ENCODE measurements at regions of chr10 and their contacts with region 1.

Region 1: GRCh38 chr10:102009801-102010425 is 46.1 kb downstream of the ARMH3 start:
- DNase-seq: peak; percentile 72 to 75
- H3K4me3 ChIP-seq: no peak overlapping the region
- H3K4me3 Mint-ChIP-seq: no peak overlapping the region
- H3K27ac Mint-ChIP-seq: peak overlapping the region; percentile 21
- H3K4me1 ChIP-seq: peaks cover 8% of the 10 kb centered on the region
- H3K4me1 Mint-ChIP-seq: peaks cover 13% of the 10 kb centered on the region
- H3K27me3 ChIP-seq: no peaks in the 10 kb centered on the region
- H3K27me3 Mint-ChIP-seq: no peaks in the 10 kb centered on the region
- CTCF ChIP-seq: peak; percentile 76 to 95

Region 2: GRCh38 chr10:101602761-101603398 is 407.0 kb before region 1 on chr10:
- CTCF ChIA-PET with region 1: interaction called, 20 read pairs
- POLR2A ChIA-PET with region 1: no interaction called
- intact Hi-C with region 1: loop called (anchors 1 kb)
- DNase-seq: peak; percentile 82 to 90
- H3K4me3 ChIP-seq: no peak overlapping the region
- H3K4me3 Mint-ChIP-seq: no peak overlapping the region
- H3K27ac Mint-ChIP-seq: no peak overlapping the region
- H3K4me1 ChIP-seq: no peaks in the 10 kb centered on the region
- H3K4me1 Mint-ChIP-seq: peaks cover 8% of the 10 kb centered on the region
- H3K27me3 ChIP-seq: no peaks in the 10 kb centered on the region
- H3K27me3 Mint-ChIP-seq: no peaks in the 10 kb centered on the region
- CTCF ChIP-seq: peak; percentile 91 to 94

Region 3: GRCh38 chr10:101835064-101835761 is 174.7 kb before region 1 on chr10:
- CTCF ChIA-PET with region 1: interaction called, 41 read pairs
- POLR2A ChIA-PET with region 1: no interaction called
- intact Hi-C with region 1: loop called (anchors 1 kb)
- DNase-seq: no peak
- H3K4me3 ChIP-seq: no peak overlapping the region
- H3K4me3 Mint-ChIP-seq: no peak overlapping the region
- H3K27ac Mint-ChIP-seq: peak overlapping the region; percentile 3
- H3K4me1 ChIP-seq: peaks cover 28% of the 10 kb centered on the region
- H3K4me1 Mint-ChIP-seq: peaks cover 10% of the 10 kb centered on the region
- H3K27me3 ChIP-seq: no peaks in the 10 kb centered on the region
- H3K27me3 Mint-ChIP-seq: no peaks in the 10 kb centered on the region
- CTCF ChIP-seq: no peak

Region 4: GRCh38 chr10:101889256-101890210 is 120.4 kb before region 1 on chr10:
- CTCF ChIA-PET with region 1: interaction called, 73 read pairs
- POLR2A ChIA-PET with region 1: no interaction called
- intact Hi-C with region 1: loop called (anchors 1 kb)
- DNase-seq: peak; percentile 77 to 81
- H3K4me3 ChIP-seq: no peak overlapping the region
- H3K4me3 Mint-ChIP-seq: no peak overlapping the region
- H3K27ac Mint-ChIP-seq: no peak overlapping the region
- H3K4me1 ChIP-seq: no peaks in the 10 kb centered on the region
- H3K4me1 Mint-ChIP-seq: no peaks in the 10 kb centered on the region
- H3K27me3 ChIP-seq: no peaks in the 10 kb centered on the region
- H3K27me3 Mint-ChIP-seq: no peaks in the 10 kb centered on the region
- CTCF ChIP-seq: peak; percentile 84 to 93

Region 5: DNA sequence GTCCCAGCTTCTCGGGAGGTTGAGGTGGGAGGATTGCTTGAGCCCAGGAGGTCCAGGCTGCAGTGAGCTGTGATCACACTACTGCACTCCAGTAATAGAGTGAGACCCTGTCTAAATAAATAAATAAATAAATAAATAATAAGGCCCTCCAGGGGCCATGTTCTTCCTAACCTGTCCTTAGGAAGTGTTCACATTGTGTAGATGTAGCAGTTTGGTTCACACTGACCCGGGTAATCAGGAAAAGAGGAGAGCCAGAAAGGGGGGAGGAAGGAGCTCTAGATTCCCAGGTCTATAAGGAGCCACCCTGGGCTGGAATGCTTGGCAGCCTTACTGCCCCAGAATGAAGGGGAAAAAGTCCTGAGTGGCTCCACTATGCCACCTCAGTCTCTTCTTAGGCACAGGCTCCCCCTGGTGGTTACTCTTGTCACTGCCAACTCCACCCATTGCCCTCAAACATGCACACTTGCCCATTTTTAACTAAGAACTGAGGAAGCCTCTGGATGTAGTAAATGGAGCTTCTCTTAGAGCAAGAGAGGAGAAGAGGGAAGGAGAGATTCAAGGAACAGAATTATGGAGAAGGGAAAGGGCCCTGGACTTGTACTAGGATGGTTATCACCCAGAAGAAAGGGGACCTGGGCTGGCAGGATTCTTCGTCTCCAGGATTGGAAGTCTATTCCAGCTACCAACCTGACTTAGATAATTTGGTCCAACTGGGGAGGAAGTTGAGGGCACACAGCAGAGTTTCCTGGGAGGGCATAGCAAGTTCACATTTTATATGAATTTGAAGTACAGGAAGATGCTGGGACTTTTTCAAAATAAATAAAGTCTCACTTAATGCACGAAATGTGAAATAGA is 63.0 kb after region 1 on chr10:
- CTCF ChIA-PET with region 1: interaction called, 17 read pairs
- POLR2A ChIA-PET with region 1: no interaction called
- intact Hi-C with region 1: loop called (anchors 1 kb)
- DNase-seq: peak; percentile 81 to 85
- H3K4me3 ChIP-seq: no peak overlapping the region
- H3K4me3 Mint-ChIP-seq: no peak overlapping the region
- H3K27ac Mint-ChIP-seq: no peak overlapping the region
- H3K4me1 ChIP-seq: no peaks in the 10 kb centered on the region
- H3K4me1 Mint-ChIP-seq: no peaks in the 10 kb centered on the region
- H3K27me3 ChIP-seq: no peaks in the 10 kb centered on the region
- H3K27me3 Mint-ChIP-seq: no peaks in the 10 kb centered on the region
- CTCF ChIP-seq: peak; percentile 95

Measured in Caco-2 (cell line).